ENCODE measurements at regions of chr11 and their contacts with region 1.

Region 1: GRCh38 chr11:14537134-14537599 is 17.0 kb upstream of the PSMA1 start:
- DNase-seq: peak; percentile 19 to 76 (median 50)
- ATAC-seq: peak; percentile 85
- H3K4me3 ChIP-seq: no peak overlapping the region
- H3K4me3 Mint-ChIP-seq: peak overlapping the region; percentile 77
- H3K27ac ChIP-seq: peak overlapping the region in 1 of 2 experiments; percentile 25
- H3K27ac Mint-ChIP-seq: peak overlapping the region; percentile 87
- H3K4me1 ChIP-seq: peaks cover 15% of the 10 kb centered on the region
- H3K4me1 Mint-ChIP-seq: peaks cover 38% of the 10 kb centered on the region
- H3K27me3 ChIP-seq: no peaks in the 10 kb centered on the region
- H3K27me3 Mint-ChIP-seq: no peaks in the 10 kb centered on the region
- CTCF ChIP-seq: peak; percentile 92

Region 2: GRCh38 chr11:14480716-14481115 is 56.5 kb before region 1 on chr11:
- CTCF ChIA-PET with region 1: no interaction called
- POLR2A ChIA-PET with region 1: no interaction called
- intact Hi-C with region 1: no loop called
- DNase-seq: no peak
- ATAC-seq: no peak
- H3K4me3 ChIP-seq: no peak overlapping the region
- H3K4me3 Mint-ChIP-seq: no peak overlapping the region
- H3K27ac ChIP-seq: no peak overlapping the region
- H3K27ac Mint-ChIP-seq: no peak overlapping the region
- H3K4me1 ChIP-seq: no peaks in the 10 kb centered on the region
- H3K4me1 Mint-ChIP-seq: peaks cover 21% of the 10 kb centered on the region
- H3K27me3 ChIP-seq: no peaks in the 10 kb centered on the region
- H3K27me3 Mint-ChIP-seq: no peaks in the 10 kb centered on the region
- CTCF ChIP-seq: no peak

Region 3: DNA sequence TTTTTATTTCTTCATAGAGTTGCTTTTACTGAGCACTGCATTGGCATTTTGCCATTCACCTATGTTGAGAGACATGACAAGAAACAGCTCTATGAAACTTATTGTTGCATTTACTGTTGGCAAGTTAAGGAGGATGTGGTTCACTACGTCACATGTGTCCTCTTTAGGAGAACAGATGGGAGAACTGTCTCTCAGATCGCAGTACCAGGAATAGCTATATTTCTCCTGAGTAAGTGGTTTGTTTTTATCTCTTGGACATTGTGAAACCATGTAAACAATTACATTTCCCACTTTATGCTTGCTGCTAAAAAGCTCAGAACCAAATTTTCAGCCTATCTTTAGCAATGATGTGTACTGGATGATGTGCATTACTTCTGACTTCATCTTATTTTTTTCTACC is 17.8 kb after region 1 on chr11:
- CTCF ChIA-PET with region 1: interaction called, 5 read pairs
- POLR2A ChIA-PET with region 1: interaction called, 4 read pairs
- intact Hi-C with region 1: loop called in 1 of 2 experiments (anchors 2 kb)
- DNase-seq: peak in 4 of 9 experiments; percentile 46 to 90 (median 70)
- ATAC-seq: peak; percentile 87
- H3K4me3 ChIP-seq: no peak overlapping the region
- H3K4me3 Mint-ChIP-seq: no peak overlapping the region
- H3K27ac ChIP-seq: peak overlapping the region; percentile 53 to 67
- H3K27ac Mint-ChIP-seq: peak overlapping the region; percentile 97
- H3K4me1 ChIP-seq: peaks cover 33% of the 10 kb centered on the region
- H3K4me1 Mint-ChIP-seq: peaks cover 51% of the 10 kb centered on the region
- H3K27me3 ChIP-seq: no peaks in the 10 kb centered on the region
- H3K27me3 Mint-ChIP-seq: no peaks in the 10 kb centered on the region
- CTCF ChIP-seq: no peak

Region 4: GRCh38 chr11:15006139-15006759 is 469.1 kb after region 1 on chr11:
- CTCF ChIA-PET with region 1: interaction called, 3 read pairs
- POLR2A ChIA-PET with region 1: no interaction called
- intact Hi-C with region 1: loop called in 1 of 2 experiments (anchors 5 kb)
- DNase-seq: peak in 3 of 9 experiments; percentile 13 to 61 (median 50)
- ATAC-seq: peak; percentile 34
- H3K4me3 ChIP-seq: no peak overlapping the region
- H3K4me3 Mint-ChIP-seq: no peak overlapping the region
- H3K27ac ChIP-seq: no peak overlapping the region
- H3K27ac Mint-ChIP-seq: no peak overlapping the region
- H3K4me1 ChIP-seq: no peaks in the 10 kb centered on the region
- H3K4me1 Mint-ChIP-seq: no peaks in the 10 kb centered on the region
- H3K27me3 ChIP-seq: no peaks in the 10 kb centered on the region
- H3K27me3 Mint-ChIP-seq: peaks cover 34% of the 10 kb centered on the region
- CTCF ChIP-seq: peak; percentile 56

Region 5: GRCh38 chr11:15208378-15209222 is 671.4 kb after region 1 on chr11:
- CTCF ChIA-PET with region 1: no interaction called
- POLR2A ChIA-PET with region 1: no interaction called
- intact Hi-C with region 1: loop called in 1 of 2 experiments (anchors 5 kb)
- DNase-seq: peak; percentile 53 to 85 (median 73)
- ATAC-seq: peak; percentile 73
- H3K4me3 ChIP-seq: no peak overlapping the region
- H3K4me3 Mint-ChIP-seq: no peak overlapping the region
- H3K27ac ChIP-seq: no peak overlapping the region
- H3K27ac Mint-ChIP-seq: no peak overlapping the region
- H3K4me1 ChIP-seq: no peaks in the 10 kb centered on the region
- H3K4me1 Mint-ChIP-seq: no peaks in the 10 kb centered on the region
- H3K27me3 ChIP-seq: no peaks in the 10 kb centered on the region
- H3K27me3 Mint-ChIP-seq: peaks cover 3% of the 10 kb centered on the region
- CTCF ChIP-seq: peak; percentile 75